PC-9 (cell line): ENCODE measurements at regions of chr18 and their contacts with region 1.

Region 1: GRCh38 chr18:70195852-70196434 is 9.5 kb downstream of the RTTN start:
- DNase-seq: peak; percentile 9 to 61
- H3K4me3 ChIP-seq: no peak overlapping the region
- H3K27ac ChIP-seq: peak overlapping the region; percentile 45; the same call in 1 of the 2 replicates
- H3K4me1 ChIP-seq: no peaks in the 10 kb centered on the region
- H3K27me3 ChIP-seq: no peaks in the 10 kb centered on the region
- CTCF ChIP-seq: peak; percentile 84

Region 2: GRCh38 chr18:70288851-70289328 is 92.9 kb after region 1 on chr18 and contains the start of gene SOCS6:
- CTCF ChIA-PET with region 1: no interaction called
- POLR2A ChIA-PET with region 1: no interaction called
- intact Hi-C with region 1: loop called (anchors 5 kb)
- DNase-seq: peak; percentile 53 to 58
- H3K4me3 ChIP-seq: peak within 1 kb of the TSS; percentile 94
- H3K27ac ChIP-seq: peak within 1 kb of the TSS; percentile 61
- H3K4me1 ChIP-seq: peaks cover 45% of the 10 kb centered on the region
- H3K27me3 ChIP-seq: no peaks in the 10 kb centered on the region
- CTCF ChIP-seq: no peak
- total RNA-seq, gene SOCS6: 20.9 and 21.0 TPM in 2 replicates

Region 3: GRCh38 chr18:70491734-70492348 is 295.9 kb after region 1 on chr18:
- CTCF ChIA-PET with region 1: no interaction called
- POLR2A ChIA-PET with region 1: no interaction called
- intact Hi-C with region 1: no loop called
- DNase-seq: peak; percentile 16 to 39
- H3K4me3 ChIP-seq: no peak overlapping the region
- H3K27ac ChIP-seq: no peak overlapping the region
- H3K4me1 ChIP-seq: no peaks in the 10 kb centered on the region
- H3K27me3 ChIP-seq: no peaks in the 10 kb centered on the region
- CTCF ChIP-seq: peak; percentile 79